ENCODE measurements at regions of chr3 and their contacts with region 1.

Region 1: GRCh38 chr3:171646357-171647133 is 163.7 kb downstream of the PLD1 start:
- DNase-seq: peak in 1 of 2 donors; percentile 39
- ATAC-seq: peak in 1 of 3 donors; percentile 29
- H3K4me3 ChIP-seq: no peak overlapping the region
- H3K4me3 Mint-ChIP-seq: no peak overlapping the region
- H3K27ac ChIP-seq: no peak overlapping the region
- H3K27ac Mint-ChIP-seq: no peak overlapping the region
- H3K4me1 ChIP-seq: no peaks in the 10 kb centered on the region
- H3K4me1 Mint-ChIP-seq: peaks cover 0 to 6% of the 10 kb centered on the region in 2 donors
- H3K27me3 ChIP-seq: no peaks in the 10 kb centered on the region
- H3K27me3 Mint-ChIP-seq: no peaks in the 10 kb centered on the region
- CTCF ChIP-seq: peak; percentile 50

Region 2: DNA sequence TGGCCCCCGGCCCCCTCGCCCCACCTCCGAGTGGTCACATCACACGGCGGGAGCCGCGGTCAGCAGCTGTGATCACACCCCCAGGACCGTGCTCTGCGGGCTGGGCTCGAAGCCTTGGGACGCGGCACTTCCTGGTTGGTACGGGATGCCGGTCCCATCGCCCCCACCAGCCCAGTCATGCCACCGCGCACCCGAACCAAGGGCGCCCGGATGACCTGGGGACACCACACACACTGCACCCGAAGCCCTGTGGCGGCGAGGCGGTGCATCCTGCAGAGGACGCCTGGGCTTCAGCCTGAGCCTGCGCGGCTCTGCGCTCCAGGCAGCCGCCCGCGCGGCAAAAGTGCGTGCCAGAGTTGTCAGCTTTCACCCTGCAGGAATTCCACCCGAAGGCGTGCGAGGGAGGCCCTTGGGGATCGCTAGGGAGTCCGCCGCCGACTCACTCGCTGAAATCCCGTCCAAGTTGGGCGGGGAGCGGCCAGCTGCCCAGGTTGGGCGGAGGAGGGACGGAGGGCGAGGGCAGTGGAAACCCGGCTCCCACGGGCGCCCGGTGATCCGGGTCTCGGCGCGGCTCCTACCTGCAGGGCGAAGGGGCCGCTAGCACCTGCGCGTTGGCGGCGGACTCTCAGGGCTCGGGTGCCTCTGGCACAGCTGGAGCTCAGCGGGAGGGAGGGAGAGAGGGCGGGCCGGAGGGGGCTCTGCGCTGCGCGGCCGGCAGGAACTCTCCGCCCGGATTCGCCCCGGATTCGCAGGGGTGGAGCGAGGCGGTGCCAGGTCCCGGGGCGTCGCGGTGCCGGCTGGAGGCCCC is 163.5 kb after region 1 on chr3 and contains the start of gene PLD1:
- intact Hi-C with region 1: no loop called
- DNase-seq: peak; percentile 58 to 65
- ATAC-seq: peak; percentile 67 to 86 (median 81)
- H3K4me3 ChIP-seq: peak within 1 kb of the TSS; percentile 73
- H3K4me3 Mint-ChIP-seq: peak within 1 kb of the TSS; percentile 93
- H3K27ac ChIP-seq: peak within 1 kb of the TSS; percentile 58
- H3K27ac Mint-ChIP-seq: peak within 1 kb of the TSS; percentile 80 to 93
- H3K4me1 ChIP-seq: peaks cover 19% of the 10 kb centered on the region
- H3K4me1 Mint-ChIP-seq: peaks cover 42 to 47% of the 10 kb centered on the region in 2 donors
- H3K27me3 ChIP-seq: no peaks in the 10 kb centered on the region
- H3K27me3 Mint-ChIP-seq: no peaks in the 10 kb centered on the region
- CTCF ChIP-seq: no peak
- total RNA-seq, gene PLD1: 13.2 to 26.3 (median 17.1) TPM

Region 3: GRCh38 chr3:172341482-172342059 is 695.0 kb after region 1 on chr3:
- intact Hi-C with region 1: loop called (anchors 1 kb)
- DNase-seq: peak in 1 of 2 donors; percentile 77
- ATAC-seq: peak; percentile 75 to 85 (median 83)
- H3K4me3 ChIP-seq: no peak overlapping the region
- H3K4me3 Mint-ChIP-seq: no peak overlapping the region
- H3K27ac ChIP-seq: no peak overlapping the region
- H3K27ac Mint-ChIP-seq: peak overlapping the region in 1 of 2 donors; percentile 51
- H3K4me1 ChIP-seq: no peaks in the 10 kb centered on the region
- H3K4me1 Mint-ChIP-seq: peaks cover 5 to 9% of the 10 kb centered on the region in 2 donors
- H3K27me3 ChIP-seq: no peaks in the 10 kb centered on the region
- H3K27me3 Mint-ChIP-seq: no peaks in the 10 kb centered on the region
- CTCF ChIP-seq: peak; percentile 75